ENCODE measurements at regions of chr12 and their contacts with region 1.

Region 1: DNA sequence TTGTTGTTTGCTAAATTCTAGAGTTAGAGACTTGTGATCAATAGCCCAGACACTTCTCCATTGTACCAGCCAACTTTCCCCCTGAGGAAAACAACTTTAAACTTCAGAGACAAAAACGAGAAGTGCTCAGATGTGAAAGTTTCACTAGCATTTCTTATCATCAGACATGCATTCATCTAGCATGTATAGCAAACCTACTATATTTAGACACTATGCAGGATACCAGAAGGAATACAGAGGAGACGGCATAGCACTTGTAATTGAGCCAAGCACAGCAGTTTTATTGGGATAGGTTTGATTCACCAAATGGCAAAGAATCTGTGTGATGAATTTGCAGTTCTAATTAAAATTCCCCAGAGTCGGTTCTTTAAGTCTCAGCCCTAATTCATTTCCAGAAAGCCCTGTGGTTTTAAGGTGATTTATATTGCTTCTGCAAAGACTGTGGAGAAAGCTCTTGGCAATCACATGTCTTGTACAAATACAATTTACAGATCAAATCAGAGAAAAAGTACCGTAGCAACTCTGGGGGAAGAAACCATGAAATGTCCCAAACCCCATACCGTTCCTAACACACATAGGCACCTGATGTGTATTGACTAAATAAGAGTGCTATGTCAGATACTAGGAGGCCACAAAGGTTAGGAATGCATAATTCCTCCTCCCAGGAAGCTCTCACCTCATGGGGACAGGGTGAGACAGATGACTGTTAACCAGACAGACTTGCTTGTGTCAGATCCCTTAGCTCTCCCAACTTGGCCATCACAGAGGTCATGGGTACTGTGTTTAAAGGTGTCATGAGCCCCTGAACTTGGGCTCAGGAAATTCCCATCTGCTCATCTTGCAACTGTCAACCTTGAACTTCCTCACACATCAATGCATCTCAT is 69.6 kb upstream of the KRAS start:
- DNase-seq: peak; percentile 63
- ATAC-seq: peak; percentile 73
- H3K4me3 ChIP-seq: no peak overlapping the region
- H3K4me3 Mint-ChIP-seq: peak overlapping the region; percentile 67
- H3K27ac ChIP-seq: peak overlapping the region; percentile 20 to 52
- H3K27ac Mint-ChIP-seq: peak overlapping the region; percentile 44
- H3K4me1 ChIP-seq: peaks cover 32 to 33% of the 10 kb centered on the region in 2 donors
- H3K4me1 Mint-ChIP-seq: peaks cover 66% of the 10 kb centered on the region
- H3K27me3 ChIP-seq: no peaks in the 10 kb centered on the region
- H3K27me3 Mint-ChIP-seq: no peaks in the 10 kb centered on the region
- CTCF ChIP-seq: no peak

Region 2: GRCh38 chr12:24879644-24880043 is 440.7 kb before region 1 on chr12:
- CTCF ChIA-PET with region 1: no interaction called
- POLR2A ChIA-PET with region 1: no interaction called
- intact Hi-C with region 1: no loop called
- DNase-seq: no peak
- ATAC-seq: no peak
- H3K4me3 ChIP-seq: no peak overlapping the region
- H3K4me3 Mint-ChIP-seq: no peak overlapping the region
- H3K27ac ChIP-seq: no peak overlapping the region
- H3K27ac Mint-ChIP-seq: no peak overlapping the region
- H3K4me1 ChIP-seq: no peaks in the 10 kb centered on the region
- H3K4me1 Mint-ChIP-seq: no peaks in the 10 kb centered on the region
- H3K27me3 ChIP-seq: no peaks in the 10 kb centered on the region
- H3K27me3 Mint-ChIP-seq: no peaks in the 10 kb centered on the region
- CTCF ChIP-seq: no peak

Region 3: GRCh38 chr12:25250744-25251730 is 69.3 kb before region 1 on chr12 and contains the start of gene KRAS:
- CTCF ChIA-PET with region 1: no interaction called
- POLR2A ChIA-PET with region 1: interaction called, 3 read pairs
- intact Hi-C with region 1: loop called (anchors 2 kb)
- DNase-seq: peak; percentile 96
- ATAC-seq: peak; percentile 80
- H3K4me3 ChIP-seq: peak within 1 kb of the TSS; percentile 59 to 94 (median 74)
- H3K4me3 Mint-ChIP-seq: peak within 1 kb of the TSS; percentile 96
- H3K27ac ChIP-seq: peak within 1 kb of the TSS; percentile 61 to 89
- H3K27ac Mint-ChIP-seq: peak within 1 kb of the TSS; percentile 99
- H3K4me1 ChIP-seq: peaks cover 25 to 42% of the 10 kb centered on the region in 2 donors
- H3K4me1 Mint-ChIP-seq: peaks cover 48% of the 10 kb centered on the region
- H3K27me3 ChIP-seq: no peaks in the 10 kb centered on the region
- H3K27me3 Mint-ChIP-seq: no peaks in the 10 kb centered on the region
- CTCF ChIP-seq: no peak
- total RNA-seq, gene KRAS: 40.7 and 41.8 TPM in 2 replicates

Region 4: DNA sequence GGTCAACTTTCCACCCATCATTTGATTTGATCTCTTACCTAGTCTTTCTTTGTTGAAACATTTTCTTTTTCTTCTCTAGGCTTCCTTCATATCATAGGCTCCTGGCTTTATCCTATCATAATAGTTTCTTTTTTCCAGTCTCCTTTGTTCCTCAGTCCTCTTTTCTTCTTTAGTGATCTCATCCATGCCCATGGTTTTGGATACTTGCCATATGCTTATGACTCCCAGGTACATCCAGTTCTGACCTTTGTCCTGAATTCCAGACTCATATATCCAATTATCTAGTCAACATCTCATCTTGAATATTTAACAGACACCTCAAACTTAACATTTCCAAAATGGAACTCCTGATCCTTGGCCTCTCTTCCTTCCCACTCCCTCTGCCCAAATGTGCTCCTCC is 33.5 kb before region 1 on chr12:
- CTCF ChIA-PET with region 1: no interaction called
- POLR2A ChIA-PET with region 1: no interaction called
- intact Hi-C with region 1: loop called (anchors 5 kb)
- DNase-seq: no peak
- ATAC-seq: no peak
- H3K4me3 ChIP-seq: no peak overlapping the region
- H3K4me3 Mint-ChIP-seq: no peak overlapping the region
- H3K27ac ChIP-seq: no peak overlapping the region
- H3K27ac Mint-ChIP-seq: no peak overlapping the region
- H3K4me1 ChIP-seq: peaks cover 0 to 3% of the 10 kb centered on the region in 2 donors
- H3K4me1 Mint-ChIP-seq: peaks cover 2% of the 10 kb centered on the region
- H3K27me3 ChIP-seq: no peaks in the 10 kb centered on the region
- H3K27me3 Mint-ChIP-seq: no peaks in the 10 kb centered on the region
- CTCF ChIP-seq: no peak

Measured in B cell (primary cell).